ENCODE measurements at regions of chr3 and their contacts with region 1.

Region 1: DNA sequence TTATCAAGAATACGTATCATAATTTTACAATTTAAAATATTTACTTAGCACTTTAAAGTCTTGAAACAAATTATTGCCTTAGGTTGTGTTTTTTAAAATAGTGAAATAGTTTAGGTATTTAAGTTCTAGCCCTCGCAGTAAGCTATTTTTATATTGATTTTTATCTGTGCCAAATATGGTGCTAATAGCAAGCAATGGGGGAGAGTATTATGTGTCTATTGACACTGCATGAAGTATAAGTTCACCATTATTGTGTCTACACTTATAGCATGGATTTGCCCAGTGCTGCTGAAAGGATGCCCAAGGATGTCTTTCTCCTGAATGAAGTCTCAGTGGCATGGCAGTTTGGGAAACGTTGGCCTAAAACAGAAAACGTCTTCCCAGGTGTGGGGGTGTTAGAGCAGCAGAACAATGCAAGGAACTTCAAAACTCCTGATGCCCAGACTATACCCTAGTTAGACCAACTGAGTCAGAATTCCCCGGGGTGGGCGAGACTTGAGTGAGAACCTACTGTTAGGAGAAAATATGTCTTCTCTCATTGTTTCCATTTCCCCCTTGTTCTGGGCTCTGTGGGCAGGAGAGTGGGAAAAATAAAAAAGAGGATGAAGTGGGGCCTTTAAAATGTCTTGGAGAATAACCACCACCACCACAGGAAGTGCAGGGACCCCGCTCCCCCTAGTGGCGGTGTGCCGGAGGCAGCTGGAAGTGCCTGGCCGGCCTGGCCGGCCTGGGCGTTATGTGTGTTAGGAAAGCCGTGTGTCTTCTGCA is 104.2 kb upstream of the SLC7A14 start:
- DNase-seq: no peak
- H3K4me3 ChIP-seq: no peak overlapping the region
- H3K27ac ChIP-seq: no peak overlapping the region
- H3K4me1 ChIP-seq: peaks cover 0 to 14% (median 11%) of the 10 kb centered on the region in 4 donors
- H3K27me3 ChIP-seq: no peaks in the 10 kb centered on the region
- CTCF ChIP-seq: peak; percentile 30 to 59 (median 46)
- EP300 ChIP-seq: no peak
- POLR2A ChIP-seq: no peak

Region 2: GRCh38 chr3:170414202-170414663 is 275.8 kb before region 1 on chr3:
- intact Hi-C with region 1: loop called (anchors 10 kb)
- DNase-seq: no peak
- H3K4me3 ChIP-seq: no peak overlapping the region
- H3K27ac ChIP-seq: no peak overlapping the region
- H3K4me1 ChIP-seq: peaks cover 12 to 14% (median 13%) of the 10 kb centered on the region in 4 donors
- H3K27me3 ChIP-seq: peaks cover 0 to 38% (median 7%) of the 10 kb centered on the region in 4 donors
- CTCF ChIP-seq: peak; percentile 78 to 95 (median 86)
- EP300 ChIP-seq: no peak
- POLR2A ChIP-seq: no peak

Measured in esophagus muscularis mucosa (tissue), 4 donors.